ENCODE measurements at regions of chr22 and their contacts with region 1.

Region 1: DNA sequence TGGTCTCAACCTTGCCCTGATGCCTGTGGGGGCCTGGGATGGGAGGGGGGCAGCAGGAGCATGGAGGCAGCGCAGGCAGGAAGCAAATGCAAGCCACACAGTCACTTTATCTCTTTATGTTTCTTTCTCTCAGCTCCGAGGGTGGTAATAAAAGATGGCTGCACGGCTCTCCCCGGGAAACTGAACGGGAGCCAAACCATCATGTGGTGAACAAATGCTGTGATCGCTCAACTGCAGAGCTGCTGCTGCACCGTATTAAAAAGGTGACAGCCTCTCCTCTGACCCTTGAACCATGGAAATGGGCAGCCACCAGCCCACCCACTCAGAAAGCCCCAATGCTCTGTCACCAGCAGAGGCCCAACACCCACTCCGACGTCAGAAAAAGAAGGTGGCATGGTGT is 110.0 kb downstream of the TIMP3 start:
- DNase-seq: no peak
- H3K4me3 ChIP-seq: no peak overlapping the region
- H3K27ac ChIP-seq: no peak overlapping the region
- H3K4me1 ChIP-seq: no peaks in the 10 kb centered on the region
- H3K27me3 ChIP-seq: no peaks in the 10 kb centered on the region
- CTCF ChIP-seq: no peak
- POLR2A ChIP-seq: no peak

Region 2: GRCh38 chr22:32839831-32840584 is 71.5 kb before region 1 on chr22:
- intact Hi-C with region 1: loop called (anchors 5 kb)
- DNase-seq: no peak
- H3K4me3 ChIP-seq: no peak overlapping the region
- H3K27ac ChIP-seq: peak overlapping the region; percentile 35 to 54
- H3K4me1 ChIP-seq: peaks cover 3% of the 10 kb centered on the region
- H3K27me3 ChIP-seq: no peaks in the 10 kb centered on the region
- CTCF ChIP-seq: no peak
- POLR2A ChIP-seq: no peak

Region 3: GRCh38 chr22:32991353-32992121 is 80.0 kb after region 1 on chr22:
- intact Hi-C with region 1: no loop called
- DNase-seq: peak; percentile 78
- H3K4me3 ChIP-seq: no peak overlapping the region
- H3K27ac ChIP-seq: no peak overlapping the region
- H3K4me1 ChIP-seq: no peaks in the 10 kb centered on the region
- H3K27me3 ChIP-seq: no peaks in the 10 kb centered on the region
- CTCF ChIP-seq: no peak
- POLR2A ChIP-seq: no peak

Measured in prostate gland (tissue), 2 donors.